Ovary (tissue), 10 donors: ENCODE measurements at regions of chr1 and their contacts with region 1.

Region 1: GRCh38 chr1:36099681-36100341 is 11.1 kb downstream of the ADPRS start:
- DNase-seq: peak; percentile 62 to 86 (median 80)
- H3K4me3 ChIP-seq: no peak overlapping the region
- H3K27ac ChIP-seq: no peak overlapping the region
- H3K4me1 ChIP-seq: no peaks in the 10 kb centered on the region
- H3K27me3 ChIP-seq: no peaks in the 10 kb centered on the region
- CTCF ChIP-seq: peak; percentile 56 to 83 (median 80)
- EP300 ChIP-seq: no peak
- POLR2A ChIP-seq: no peak

Region 2: DNA sequence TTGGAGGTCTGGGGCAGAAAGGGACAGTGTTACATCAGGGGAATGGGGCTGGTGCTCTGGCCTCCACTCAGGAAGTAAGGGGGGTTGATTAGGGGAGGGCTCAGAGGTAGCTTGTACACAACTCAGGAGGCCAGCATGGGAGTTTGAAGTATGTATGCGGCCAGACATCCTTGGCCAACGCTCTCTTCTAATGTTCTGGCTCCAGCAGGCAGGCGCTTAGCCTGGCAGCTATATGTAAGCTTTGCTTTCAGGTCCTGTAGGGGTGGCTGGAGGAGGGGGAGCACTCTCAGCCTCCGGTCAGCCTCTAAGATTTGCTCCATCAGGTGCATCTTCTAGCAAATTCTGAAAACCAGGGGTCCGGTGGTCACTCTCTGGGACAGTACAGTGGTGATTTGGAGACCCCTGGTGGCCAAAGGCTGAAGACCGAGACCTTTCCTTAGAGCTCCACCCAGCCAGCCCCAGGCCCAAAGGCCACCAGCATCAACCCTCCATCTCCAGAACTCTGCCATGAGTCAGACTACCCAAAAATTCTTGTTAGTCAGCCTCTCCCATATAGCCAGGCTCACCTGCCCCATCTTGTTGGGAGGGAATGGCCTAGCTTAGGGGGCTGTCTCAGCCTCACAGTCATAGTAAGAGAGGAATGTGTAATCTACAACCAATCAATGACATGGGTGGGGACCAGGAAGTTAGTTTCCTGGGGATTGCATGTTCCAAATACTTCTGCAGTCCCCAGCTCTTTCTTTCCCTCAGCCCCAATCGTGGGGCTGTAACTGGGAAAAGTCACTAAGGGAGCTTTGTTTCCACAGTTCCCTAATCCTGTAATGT is 34.9 kb after region 1 on chr1:
- intact Hi-C with region 1: loop called in 2 of 4 experiments (anchors 5 kb)
- DNase-seq: peak; percentile 41 to 70 (median 58)
- H3K4me3 ChIP-seq: no peak overlapping the region
- H3K27ac ChIP-seq: no peak overlapping the region
- H3K4me1 ChIP-seq: peaks cover 2% of the 10 kb centered on the region
- H3K27me3 ChIP-seq: no peaks in the 10 kb centered on the region
- CTCF ChIP-seq: peak; percentile 35 to 62 (median 48)
- EP300 ChIP-seq: no peak
- POLR2A ChIP-seq: no peak

Region 3: DNA sequence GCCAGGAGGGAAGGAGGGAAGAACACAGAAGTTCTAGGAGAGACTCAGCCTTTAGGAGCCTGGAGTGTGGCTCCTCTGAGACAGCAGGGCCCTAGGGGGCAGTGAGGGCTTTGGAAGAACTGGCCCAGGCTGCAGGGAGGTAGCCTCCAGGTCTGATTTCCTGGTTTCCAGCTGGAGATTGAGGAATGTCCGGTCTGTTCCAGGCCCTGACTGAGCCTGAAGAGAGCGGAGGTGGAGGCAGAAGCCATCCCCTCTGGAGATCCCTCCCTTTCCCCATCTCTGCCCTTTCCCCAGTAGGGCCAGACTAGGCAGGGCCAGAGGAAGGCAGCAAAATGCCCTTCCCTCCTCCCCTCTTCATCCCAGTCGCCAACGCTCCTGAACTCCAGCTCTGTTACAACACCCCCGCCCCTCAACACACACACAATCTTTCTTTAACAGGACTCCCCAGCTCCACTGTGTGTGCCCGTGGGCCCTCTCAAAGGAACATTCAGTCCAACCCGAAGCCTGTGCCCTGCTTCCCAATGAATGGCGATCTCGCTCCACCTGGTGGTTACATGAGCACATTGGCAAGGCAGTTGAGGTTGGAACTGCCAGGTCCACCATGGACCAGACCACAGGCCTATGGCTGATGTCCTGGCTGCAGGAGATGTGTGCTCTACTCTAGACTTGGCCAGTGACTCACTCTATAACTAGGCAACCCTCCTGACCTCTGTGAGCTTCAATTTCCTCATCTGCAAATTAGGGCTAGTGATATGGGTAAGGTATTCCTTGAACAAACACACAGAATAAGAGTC is 88.2 kb after region 1 on chr1:
- intact Hi-C with region 1: loop called in 3 of 4 experiments (anchors 2 to 5 kb)
- DNase-seq: peak; percentile 77 to 85 (median 82)
- H3K4me3 ChIP-seq: no peak overlapping the region
- H3K27ac ChIP-seq: peak overlapping the region; percentile 47 to 55
- H3K4me1 ChIP-seq: peaks cover 4% of the 10 kb centered on the region
- H3K27me3 ChIP-seq: no peaks in the 10 kb centered on the region
- CTCF ChIP-seq: peak; percentile 67 to 90 (median 89)
- EP300 ChIP-seq: no peak
- POLR2A ChIP-seq: peak; percentile 5

Region 4: GRCh38 chr1:36411674-36412520 is 312.1 kb after region 1 on chr1:
- intact Hi-C with region 1: loop called in 1 of 4 experiments (anchors 10 kb)
- DNase-seq: no peak
- H3K4me3 ChIP-seq: no peak overlapping the region
- H3K27ac ChIP-seq: no peak overlapping the region
- H3K4me1 ChIP-seq: no peaks in the 10 kb centered on the region
- H3K27me3 ChIP-seq: no peaks in the 10 kb centered on the region
- CTCF ChIP-seq: no peak
- EP300 ChIP-seq: no peak
- POLR2A ChIP-seq: no peak

Region 5: DNA sequence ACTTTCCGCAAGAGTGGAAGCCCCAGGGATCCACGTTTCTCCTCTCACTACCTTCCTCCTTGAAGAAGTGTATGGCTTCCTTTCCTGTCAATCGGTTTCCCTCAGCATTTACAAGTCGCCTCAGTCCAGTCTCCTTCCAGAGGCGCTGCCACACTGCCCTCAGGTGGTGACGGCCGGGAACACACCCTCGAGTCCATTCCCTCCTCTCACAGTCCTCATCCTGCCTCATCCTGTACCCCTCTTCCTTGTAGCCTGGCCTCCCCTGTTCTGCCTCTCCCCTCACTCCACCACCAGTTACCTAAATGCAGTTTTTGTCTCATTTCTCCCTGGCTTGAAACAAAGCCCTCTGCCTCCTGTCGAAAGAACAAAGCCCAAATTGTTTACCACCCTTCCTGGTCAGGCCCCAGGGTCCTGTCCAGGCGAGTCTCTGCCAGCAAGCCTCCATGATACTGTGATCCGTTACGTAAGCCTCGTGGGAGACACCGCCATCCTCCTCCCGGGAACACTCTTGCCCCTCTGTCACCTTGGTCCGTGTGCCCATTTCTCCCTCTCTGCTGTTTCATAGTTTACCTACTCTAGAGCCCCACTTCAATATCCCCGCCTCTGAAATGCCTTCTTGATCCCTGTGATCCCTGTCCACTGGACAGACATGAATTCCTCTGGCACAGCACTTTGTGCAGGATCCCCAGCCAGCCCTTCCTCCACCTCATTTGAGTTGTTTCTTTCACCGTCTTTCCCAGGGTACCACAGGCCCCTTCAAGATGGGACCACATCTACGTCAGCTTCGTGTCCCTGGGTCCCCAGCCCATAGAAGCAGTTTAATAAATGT is 321.2 kb after region 1 on chr1:
- intact Hi-C with region 1: loop called in 2 of 4 experiments (anchors 10 kb)
- DNase-seq: peak; percentile 77 to 94 (median 91)
- H3K4me3 ChIP-seq: no peak overlapping the region
- H3K27ac ChIP-seq: no peak overlapping the region
- H3K4me1 ChIP-seq: peaks cover 1% of the 10 kb centered on the region
- H3K27me3 ChIP-seq: no peaks in the 10 kb centered on the region
- CTCF ChIP-seq: peak; percentile 74 to 82 (median 75)
- EP300 ChIP-seq: no peak
- POLR2A ChIP-seq: no peak